Activated naive CD4-positive, alpha-beta T cell treated with anti-CD3 and anti-CD28 coated beads for 36 hours (primary cell): ENCODE measurements at regions of chr9 and their contacts with region 1.

Region 1: DNA sequence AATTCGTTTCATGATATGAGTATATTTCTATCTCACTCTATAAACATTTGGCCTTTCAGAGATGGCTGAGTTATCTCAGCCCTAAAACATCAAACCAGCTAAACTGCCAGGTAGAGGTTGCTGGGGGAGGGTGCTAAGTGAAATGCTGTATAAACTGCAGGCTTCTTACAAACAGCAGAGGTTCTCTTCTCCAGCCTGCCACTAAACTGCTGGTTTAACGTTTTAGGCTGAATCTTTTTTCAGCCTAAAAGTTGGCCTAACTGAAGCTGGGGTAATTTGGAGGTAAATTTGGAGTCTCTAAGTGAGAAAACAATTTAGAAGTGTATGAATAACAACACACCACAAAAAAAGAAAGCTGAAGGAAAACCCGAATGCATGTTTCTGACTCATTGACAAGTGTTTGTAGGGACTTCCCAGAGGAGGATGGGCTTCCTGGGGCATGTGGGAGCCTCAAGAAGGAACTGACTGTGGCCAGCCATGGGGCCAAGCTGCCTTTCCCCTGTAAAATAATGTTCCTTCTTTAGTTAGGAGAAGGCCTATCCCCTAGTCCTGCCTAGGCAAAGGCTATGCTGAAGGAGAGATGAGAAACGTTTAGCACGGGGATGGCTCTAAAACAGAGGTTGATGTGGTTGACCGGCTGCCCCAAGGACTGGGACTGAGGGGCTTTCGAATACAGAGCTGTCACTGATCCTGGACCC is 44.3 kb downstream of the SLC28A3 start:
- DNase-seq: peak; percentile 83
- H3K4me3 Mint-ChIP-seq: peak overlapping the region; percentile 52
- H3K27ac Mint-ChIP-seq: peak overlapping the region; percentile 99
- H3K4me1 Mint-ChIP-seq: peaks cover 60% of the 10 kb centered on the region
- H3K27me3 Mint-ChIP-seq: no peaks in the 10 kb centered on the region

Region 2: DNA sequence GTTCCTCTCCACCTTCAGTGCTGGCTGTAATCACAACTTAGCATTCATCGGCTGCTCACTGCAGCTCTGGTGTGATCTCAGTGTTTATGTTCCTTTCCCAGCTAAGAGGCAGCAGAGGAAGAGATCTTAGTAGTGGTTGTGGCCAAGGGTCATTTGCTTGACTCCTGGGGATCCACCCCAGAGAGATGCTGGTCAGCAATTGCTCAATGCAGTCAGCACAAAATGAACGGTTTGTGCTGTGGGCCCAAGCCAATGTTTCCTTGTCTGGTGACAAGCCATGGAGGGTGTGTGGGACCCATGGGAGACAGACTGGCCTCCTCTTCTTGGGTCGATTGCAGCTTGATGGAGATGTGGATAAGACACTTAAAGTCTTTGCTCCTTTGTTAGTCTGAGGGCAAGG is 742.0 kb before region 1 on chr9:
- CTCF ChIA-PET with region 1: no interaction called
- intact Hi-C with region 1: no loop called
- DNase-seq: no peak
- H3K4me3 Mint-ChIP-seq: no peak overlapping the region
- H3K27ac Mint-ChIP-seq: no peak overlapping the region
- H3K4me1 Mint-ChIP-seq: no peaks in the 10 kb centered on the region
- H3K27me3 Mint-ChIP-seq: peaks cover 2% of the 10 kb centered on the region

Region 3: DNA sequence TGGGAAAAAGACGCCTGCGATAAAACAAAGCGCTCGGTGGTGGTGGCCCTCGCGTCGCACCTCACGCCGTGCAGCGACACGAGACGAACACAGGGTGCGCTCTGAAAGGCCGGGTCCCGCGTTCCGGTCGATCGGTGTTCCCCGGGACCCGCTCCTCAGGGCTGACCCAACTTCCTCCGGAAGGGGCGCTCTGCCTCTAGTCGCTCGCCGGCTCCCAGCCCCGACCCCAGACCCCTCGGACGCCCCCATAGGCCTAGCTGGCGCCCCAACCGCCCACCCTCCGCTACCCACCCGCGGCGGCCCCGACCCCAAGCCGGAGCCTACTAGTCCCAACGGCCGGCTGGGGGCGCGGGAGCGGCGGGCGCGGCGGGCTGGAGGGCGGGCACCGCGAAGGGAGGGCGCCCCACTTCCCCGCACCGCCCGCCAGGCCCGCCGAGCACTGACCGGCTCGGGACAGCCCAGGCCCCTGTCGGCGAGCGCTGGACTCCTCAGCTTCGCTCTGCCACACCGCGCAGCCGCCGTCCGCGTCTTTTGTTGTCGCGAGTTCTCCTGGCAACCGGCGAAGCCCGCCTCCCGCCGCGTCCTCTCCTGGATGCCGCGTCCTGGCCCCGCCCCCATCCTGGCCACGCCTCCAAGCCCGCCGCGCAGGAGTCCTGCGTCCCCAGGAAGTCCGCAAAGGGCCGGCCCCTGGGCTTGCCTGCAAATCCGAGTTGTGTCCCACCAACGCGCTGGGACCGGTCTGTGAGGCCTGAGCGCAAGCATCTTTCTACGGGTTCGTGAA is 375.2 kb before region 1 on chr9 and contains the start of gene KIF27:
- CTCF ChIA-PET with region 1: no interaction called
- intact Hi-C with region 1: loop called (anchors 1 kb)
- DNase-seq: peak; percentile 98
- H3K4me3 Mint-ChIP-seq: peak within 1 kb of the TSS; percentile 82
- H3K27ac Mint-ChIP-seq: peak within 1 kb of the TSS; percentile 90
- H3K4me1 Mint-ChIP-seq: peaks cover 10% of the 10 kb centered on the region
- H3K27me3 Mint-ChIP-seq: no peaks in the 10 kb centered on the region
- total RNA-seq, gene KIF27: 2.7 to 3.8 TPM

Region 4: DNA sequence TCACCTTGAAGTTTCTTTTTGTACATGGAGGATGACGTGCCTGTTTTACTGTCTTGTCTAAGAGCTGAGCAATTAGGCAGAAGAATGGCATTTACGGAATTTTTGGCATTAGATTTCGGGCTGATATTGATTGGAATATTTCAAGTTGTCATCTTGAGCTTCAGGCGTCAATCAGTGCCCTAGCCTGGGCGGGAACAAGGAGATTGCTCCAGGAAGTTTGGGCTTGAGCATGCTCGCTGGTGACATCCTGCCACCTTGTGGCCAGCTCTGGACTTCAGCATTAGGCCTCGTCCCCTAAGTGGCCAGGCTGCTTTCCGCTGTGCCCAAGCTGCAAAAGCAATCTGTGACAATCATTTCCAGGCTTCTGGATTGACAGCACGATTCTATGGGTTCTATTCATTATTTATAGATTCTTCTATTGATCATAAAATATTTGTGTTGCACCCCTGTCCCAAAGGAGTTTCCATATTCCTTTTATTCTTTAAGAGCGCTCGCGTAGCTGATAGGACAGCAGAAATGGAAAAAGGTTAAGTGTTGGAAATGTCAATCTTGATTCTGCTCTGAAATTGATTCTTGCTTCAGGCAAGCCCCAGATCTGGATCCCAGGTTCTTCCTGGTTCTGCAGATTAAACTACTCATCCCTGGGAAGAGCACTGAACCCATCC is 35.1 kb before region 1 on chr9:
- CTCF ChIA-PET with region 1: interaction called, 27 read pairs
- intact Hi-C with region 1: loop called (anchors 1 kb)
- DNase-seq: peak; percentile 76
- H3K4me3 Mint-ChIP-seq: peak overlapping the region; percentile 7
- H3K27ac Mint-ChIP-seq: no peak overlapping the region
- H3K4me1 Mint-ChIP-seq: peaks cover 7% of the 10 kb centered on the region
- H3K27me3 Mint-ChIP-seq: no peaks in the 10 kb centered on the region

Region 5: GRCh38 chr9:84278130-84278529 is 18.2 kb before region 1 on chr9:
- CTCF ChIA-PET with region 1: interaction called, 12 read pairs
- intact Hi-C with region 1: no loop called
- DNase-seq: no peak
- H3K4me3 Mint-ChIP-seq: no peak overlapping the region
- H3K27ac Mint-ChIP-seq: no peak overlapping the region
- H3K4me1 Mint-ChIP-seq: no peaks in the 10 kb centered on the region
- H3K27me3 Mint-ChIP-seq: peaks cover 13% of the 10 kb centered on the region

Region 6: GRCh38 chr9:85741875-85742629 is 1445.8 kb after region 1 on chr9 and contains the start of gene AGTPBP1:
- CTCF ChIA-PET with region 1: interaction called, 3 read pairs
- intact Hi-C with region 1: loop called (anchors 1 kb)
- DNase-seq: peak; percentile 95
- H3K4me3 Mint-ChIP-seq: peak within 1 kb of the TSS; percentile 83
- H3K27ac Mint-ChIP-seq: peak within 1 kb of the TSS; percentile 94
- H3K4me1 Mint-ChIP-seq: peaks cover 30% of the 10 kb centered on the region
- H3K27me3 Mint-ChIP-seq: peaks cover 6% of the 10 kb centered on the region
- total RNA-seq, gene AGTPBP1: 37.6 to 39.0 TPM